ENCODE measurements at regions of chr20 and their contacts with region 1.

Region 1: DNA sequence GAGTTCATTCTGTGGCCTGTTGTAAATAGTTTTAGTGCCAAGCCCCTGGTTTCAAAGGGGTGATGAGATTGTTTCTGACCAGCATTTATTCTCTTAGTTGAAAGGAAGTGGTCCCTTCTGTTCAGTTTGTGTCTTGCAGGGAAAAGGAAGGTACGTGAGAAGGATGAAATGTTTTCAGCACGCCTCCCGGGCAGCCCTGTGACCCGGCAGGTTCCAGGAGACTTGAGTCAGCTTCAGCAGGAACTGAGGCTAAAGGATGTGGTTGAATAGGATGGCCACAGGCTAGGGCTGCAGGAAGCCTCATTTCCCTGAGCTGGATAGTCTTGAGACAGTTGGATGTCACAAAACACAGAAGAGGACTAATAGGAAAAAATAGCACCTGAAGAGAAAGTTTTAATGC is 132.4 kb upstream of the SYNDIG1 start:
- DNase-seq: no peak
- ATAC-seq: no peak
- H3K4me3 ChIP-seq: no peak overlapping the region
- H3K27ac ChIP-seq: no peak overlapping the region
- H3K4me1 ChIP-seq: no peaks in the 10 kb centered on the region
- H3K27me3 ChIP-seq: peaks cover 0 to 2% (median 0%) of the 10 kb centered on the region in 9 donors
- CTCF ChIP-seq: no peak
- POLR2A ChIP-seq: no peak

Region 2: DNA sequence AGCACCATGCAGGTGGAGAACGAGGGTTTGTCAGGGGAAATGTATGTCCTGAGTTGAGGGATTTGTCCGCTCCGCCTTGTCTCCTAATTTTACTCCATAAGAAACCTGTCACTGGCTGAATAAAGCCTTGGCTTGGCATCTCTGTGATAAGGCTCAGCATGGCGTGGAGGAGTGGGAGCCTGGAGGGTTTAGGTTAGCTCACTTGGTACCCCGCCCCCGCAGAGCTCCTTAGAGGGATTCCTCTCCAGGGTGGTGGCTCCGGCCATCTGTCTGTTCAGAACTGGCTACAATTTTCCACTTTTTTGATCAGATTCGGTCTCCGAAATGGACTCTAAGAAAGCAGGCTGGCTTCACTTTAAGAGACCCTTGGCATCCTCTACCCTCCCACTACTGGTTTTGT is 59.9 kb before region 1 on chr20:
- intact Hi-C with region 1: loop called in 1 of 10 experiments (anchors 10 kb)
- DNase-seq: no peak
- ATAC-seq: no peak
- H3K4me3 ChIP-seq: no peak overlapping the region
- H3K27ac ChIP-seq: no peak overlapping the region
- H3K4me1 ChIP-seq: no peaks in the 10 kb centered on the region
- H3K27me3 ChIP-seq: peaks cover 0 to 10% (median 0%) of the 10 kb centered on the region in 9 donors
- CTCF ChIP-seq: no peak
- POLR2A ChIP-seq: no peak

Region 3: DNA sequence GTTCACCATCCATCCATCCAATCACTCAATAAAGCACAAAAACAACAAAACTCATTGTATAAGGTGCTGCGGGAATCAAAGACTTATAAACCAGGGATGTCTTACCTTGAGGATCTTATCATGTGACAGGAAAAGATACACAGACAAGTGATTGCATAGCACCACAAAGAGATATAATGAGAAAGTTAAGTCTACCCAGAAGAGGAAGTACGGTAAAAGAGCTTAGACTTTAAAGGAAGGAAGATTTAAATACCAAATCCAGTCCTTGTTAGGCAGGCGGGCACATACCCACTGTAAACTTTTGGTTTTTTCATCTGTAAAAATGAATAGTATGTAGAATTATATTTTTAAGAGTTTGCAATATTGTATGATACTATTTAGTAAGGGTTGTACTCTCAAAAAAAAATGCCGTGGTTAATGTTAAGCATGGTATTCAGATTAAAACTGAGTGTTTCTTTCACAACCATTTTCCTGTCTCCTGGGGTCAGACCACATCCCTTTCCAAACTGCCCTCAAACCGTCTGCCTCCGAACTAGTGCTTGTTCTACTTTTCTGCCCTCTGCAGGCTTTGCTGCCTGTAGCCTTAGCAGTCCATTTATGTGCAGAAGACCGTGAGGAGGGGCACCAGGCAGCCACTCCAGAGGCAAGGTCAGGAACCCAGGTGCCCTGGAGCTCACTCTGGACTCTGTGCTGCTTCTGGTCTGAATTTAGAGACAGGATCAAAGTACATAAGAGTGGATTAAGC is 47.2 kb before region 1 on chr20:
- intact Hi-C with region 1: loop called in 1 of 10 experiments (anchors 5 kb)
- DNase-seq: no peak
- ATAC-seq: no peak
- H3K4me3 ChIP-seq: no peak overlapping the region
- H3K27ac ChIP-seq: no peak overlapping the region
- H3K4me1 ChIP-seq: no peaks in the 10 kb centered on the region
- H3K27me3 ChIP-seq: no peaks in the 10 kb centered on the region
- CTCF ChIP-seq: no peak
- POLR2A ChIP-seq: no peak